Mammary epithelial cell (primary cell): ENCODE measurements at regions of chr6 and their contacts with region 1.

Region 1: DNA sequence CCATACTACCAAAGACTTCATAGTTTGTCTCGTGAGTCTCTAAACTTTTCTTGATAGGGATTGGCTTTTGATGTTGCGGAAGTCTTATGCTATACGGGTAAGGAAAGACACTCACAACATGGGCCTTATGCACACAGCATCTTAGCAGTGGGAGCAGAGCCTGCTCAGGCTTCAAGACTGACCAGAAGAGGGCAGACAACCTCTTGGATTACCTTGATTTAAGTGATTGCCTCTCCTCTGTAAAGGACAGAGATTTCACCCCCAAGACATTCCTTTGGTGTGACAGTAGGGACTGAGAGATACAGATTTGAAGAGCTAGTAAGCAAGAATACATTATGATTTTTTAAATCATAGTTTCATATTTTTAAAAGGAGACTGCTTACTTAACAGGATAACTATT is 71.0 kb upstream of the SAMD3 start:
- DNase-seq: peak; percentile 42
- H3K4me3 ChIP-seq: no peak overlapping the region
- H3K27ac ChIP-seq: no peak overlapping the region
- H3K4me1 ChIP-seq: no peaks in the 10 kb centered on the region
- H3K27me3 ChIP-seq: no peaks in the 10 kb centered on the region
- CTCF ChIP-seq: peak; percentile 65 to 76

Region 2: DNA sequence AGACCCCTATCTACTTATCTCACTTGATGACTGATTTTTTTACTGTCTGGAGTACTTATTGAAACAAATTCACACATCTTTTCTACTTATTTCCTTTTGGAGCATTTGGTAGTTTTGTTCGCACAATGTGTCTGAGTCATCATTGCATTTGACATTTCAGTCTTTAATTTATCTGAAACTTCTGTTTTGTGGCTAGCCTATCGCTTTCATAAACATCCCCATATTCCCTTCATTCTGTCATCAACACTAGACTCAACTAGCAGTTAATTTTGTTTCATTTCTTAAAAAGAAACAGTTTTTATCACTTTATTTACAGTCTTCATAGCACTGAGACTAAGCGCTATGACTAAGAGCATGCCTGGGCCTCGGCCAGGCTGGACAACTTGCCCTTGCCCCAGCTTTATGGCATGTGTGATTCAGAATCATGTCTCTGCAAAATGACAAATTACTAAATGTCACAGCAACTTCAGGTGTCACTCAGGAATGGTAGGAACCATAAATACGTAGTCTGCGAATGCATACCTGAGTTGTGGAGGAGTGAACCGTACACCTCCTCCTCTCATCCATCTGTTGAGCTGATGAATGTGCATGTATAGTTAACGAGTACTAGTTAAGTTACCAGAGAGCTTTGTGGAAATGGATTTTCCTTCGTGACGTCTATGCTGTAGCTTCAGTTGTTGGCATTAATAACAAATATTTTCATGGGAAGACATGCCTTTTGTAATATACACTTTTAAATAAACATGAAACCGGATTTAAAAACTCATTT is 259.2 kb before region 1 on chr6:
- CTCF ChIA-PET with region 1: no interaction called
- dilution Hi-C with region 1: no loop called
- in situ Hi-C with region 1: no loop called
- intact Hi-C with region 1: no loop called
- DNase-seq: peak; percentile 8
- H3K4me3 ChIP-seq: no peak overlapping the region
- H3K27ac ChIP-seq: no peak overlapping the region
- H3K4me1 ChIP-seq: no peaks in the 10 kb centered on the region
- H3K27me3 ChIP-seq: no peaks in the 10 kb centered on the region
- CTCF ChIP-seq: no peak

Region 3: GRCh38 chr6:130167655-130168054 is 126.1 kb before region 1 on chr6:
- CTCF ChIA-PET with region 1: no interaction called
- dilution Hi-C with region 1: no loop called
- in situ Hi-C with region 1: no loop called
- intact Hi-C with region 1: no loop called
- DNase-seq: peak; percentile 79
- H3K4me3 ChIP-seq: no peak overlapping the region
- H3K27ac ChIP-seq: no peak overlapping the region
- H3K4me1 ChIP-seq: no peaks in the 10 kb centered on the region
- H3K27me3 ChIP-seq: no peaks in the 10 kb centered on the region
- CTCF ChIP-seq: no peak

Region 4: GRCh38 chr6:130697995-130698535 is 404.3 kb after region 1 on chr6:
- CTCF ChIA-PET with region 1: interaction called, 3 read pairs
- dilution Hi-C with region 1: no loop called
- in situ Hi-C with region 1: no loop called
- intact Hi-C with region 1: loop called (anchors 1 kb)
- DNase-seq: peak; percentile 41
- H3K4me3 ChIP-seq: no peak overlapping the region
- H3K27ac ChIP-seq: peak overlapping the region; percentile 24
- H3K4me1 ChIP-seq: peaks cover 8% of the 10 kb centered on the region
- H3K27me3 ChIP-seq: no peaks in the 10 kb centered on the region
- CTCF ChIP-seq: peak; percentile 94 to 96

Region 5: GRCh38 chr6:130843575-130844320 is 549.9 kb after region 1 on chr6:
- CTCF ChIA-PET with region 1: no interaction called
- dilution Hi-C with region 1: no loop called
- in situ Hi-C with region 1: no loop called
- intact Hi-C with region 1: loop called (anchors 5 kb)
- DNase-seq: peak; percentile 23
- H3K4me3 ChIP-seq: no peak overlapping the region
- H3K27ac ChIP-seq: no peak overlapping the region
- H3K4me1 ChIP-seq: no peaks in the 10 kb centered on the region
- H3K27me3 ChIP-seq: no peaks in the 10 kb centered on the region
- CTCF ChIP-seq: peak; percentile 36 to 60

Region 6: GRCh38 chr6:130872250-130873095 is 578.7 kb after region 1 on chr6:
- CTCF ChIA-PET with region 1: no interaction called
- dilution Hi-C with region 1: no loop called
- in situ Hi-C with region 1: no loop called
- intact Hi-C with region 1: loop called (anchors 5 kb)
- DNase-seq: peak; percentile 26
- H3K4me3 ChIP-seq: no peak overlapping the region
- H3K27ac ChIP-seq: no peak overlapping the region
- H3K4me1 ChIP-seq: no peaks in the 10 kb centered on the region
- H3K27me3 ChIP-seq: no peaks in the 10 kb centered on the region
- CTCF ChIP-seq: peak; percentile 94 to 96